Upper lobe of right lung (tissue), 1 donor: ENCODE measurements at regions of chr5 and their contacts with region 1.

Region 1: GRCh38 chr5:96601811-96602244 is 60.3 kb upstream of the CAST start:
- DNase-seq: no peak
- ATAC-seq: peak; percentile 93
- H3K4me3 ChIP-seq: no peak overlapping the region
- H3K27ac ChIP-seq: no peak overlapping the region
- H3K4me1 ChIP-seq: no peaks in the 10 kb centered on the region
- H3K27me3 ChIP-seq: no peaks in the 10 kb centered on the region
- CTCF ChIP-seq: peak; percentile 84

Region 2: GRCh38 chr5:95858661-95859326 is 743.0 kb before region 1 on chr5:
- intact Hi-C with region 1: loop called (anchors 10 kb)
- DNase-seq: peak; percentile 95
- ATAC-seq: peak; percentile 88
- H3K4me3 ChIP-seq: peak overlapping the region; percentile 30
- H3K27ac ChIP-seq: peak overlapping the region; percentile 87
- H3K4me1 ChIP-seq: peaks cover 69% of the 10 kb centered on the region
- H3K27me3 ChIP-seq: no peaks in the 10 kb centered on the region
- CTCF ChIP-seq: peak; percentile 99

Region 3: DNA sequence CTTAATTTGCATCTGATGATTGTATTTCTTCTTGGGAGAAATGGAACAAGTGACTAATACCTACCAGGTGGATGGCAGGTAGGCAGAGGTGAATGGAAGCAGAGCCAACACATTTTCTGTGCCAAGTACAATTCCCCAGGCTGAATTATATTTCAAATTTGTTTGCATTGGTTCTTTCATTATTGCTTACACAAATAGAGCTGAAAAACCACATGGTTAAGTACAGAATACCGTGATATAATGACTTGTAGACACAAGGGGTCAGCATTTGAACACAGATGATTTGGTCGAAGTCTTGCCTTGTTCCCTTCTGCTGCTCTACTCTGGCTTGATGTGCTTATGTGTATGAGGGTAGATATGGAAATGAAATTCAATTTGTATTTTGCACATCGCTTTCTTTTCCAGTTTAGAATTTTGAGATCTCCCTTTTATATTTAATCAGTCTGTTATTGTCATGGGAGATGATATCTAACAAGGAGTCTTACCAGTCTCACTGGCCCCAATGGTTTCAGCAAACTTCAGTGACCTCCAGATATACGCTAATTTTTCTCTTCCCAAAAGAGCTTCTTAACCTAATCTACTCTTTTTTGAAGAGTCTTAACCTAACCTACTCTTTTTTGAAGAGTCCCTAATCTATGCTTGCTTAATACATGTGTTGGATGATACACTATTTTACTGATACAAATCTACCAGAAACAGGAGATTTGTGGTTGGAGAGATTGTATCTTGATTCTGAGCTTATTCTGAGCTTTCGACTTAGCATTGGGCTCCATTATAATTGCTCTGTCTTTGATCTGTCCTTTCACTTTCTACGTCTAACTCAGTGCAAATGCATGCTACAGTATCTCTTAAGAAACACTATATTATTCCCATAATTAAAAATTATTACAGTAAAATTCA is 256.9 kb before region 1 on chr5:
- intact Hi-C with region 1: loop called (anchors 10 kb)
- DNase-seq: no peak
- ATAC-seq: peak; percentile 93
- H3K4me3 ChIP-seq: no peak overlapping the region
- H3K27ac ChIP-seq: no peak overlapping the region
- H3K4me1 ChIP-seq: no peaks in the 10 kb centered on the region
- H3K27me3 ChIP-seq: no peaks in the 10 kb centered on the region
- CTCF ChIP-seq: peak; percentile 60